ENCODE measurements at regions of chr12 and their contacts with region 1.

Region 1: GRCh38 chr12:123384318-123384993 is 524 bp downstream of the KMT5A start:
- DNase-seq: peak; percentile 11
- ATAC-seq: peak; percentile 4
- H3K4me3 ChIP-seq: peak overlapping the region; percentile 93
- H3K27ac ChIP-seq: no peak overlapping the region; the same call in 1 of the 2 replicates
- H3K4me1 ChIP-seq: peaks cover 18% of the 10 kb centered on the region
- H3K27me3 ChIP-seq: no peaks in the 10 kb centered on the region
- CTCF ChIP-seq: no peak; the same call in 1 of the 2 replicates

Region 2: GRCh38 chr12:123271001-123271729 is 113.3 kb before region 1 on chr12:
- CTCF ChIA-PET with region 1: no interaction called
- POLR2A ChIA-PET with region 1: no interaction called
- intact Hi-C with region 1: no loop called
- DNase-seq: peak; percentile 63
- ATAC-seq: peak; percentile 68
- H3K4me3 ChIP-seq: peak overlapping the region; percentile 99
- H3K27ac ChIP-seq: no peak overlapping the region
- H3K4me1 ChIP-seq: peaks cover 10% of the 10 kb centered on the region
- H3K27me3 ChIP-seq: no peaks in the 10 kb centered on the region
- CTCF ChIP-seq: 0 out of 2 replicates have a peak, but pooled peaks have one; percentile 18

Region 3: DNA sequence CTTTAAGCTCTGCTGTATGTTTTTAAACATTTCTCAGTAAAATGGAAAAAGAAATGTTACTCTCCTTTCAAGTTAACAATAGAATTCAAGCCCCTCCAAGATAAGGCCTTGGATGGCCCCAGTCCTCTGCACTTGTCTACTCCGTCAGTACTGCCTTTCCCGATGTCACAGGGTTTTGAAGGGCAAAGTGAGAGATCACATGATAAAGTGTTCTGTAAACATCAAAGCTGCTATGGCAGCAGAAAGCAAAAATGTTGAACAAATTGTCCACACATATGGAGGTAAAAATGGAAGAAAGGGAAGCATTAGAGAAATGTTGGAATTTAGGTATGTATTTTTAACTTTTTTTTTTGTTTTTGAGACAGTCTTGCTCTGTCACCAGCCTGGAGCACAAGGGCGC is 79.3 kb before region 1 on chr12:
- CTCF ChIA-PET with region 1: no interaction called
- POLR2A ChIA-PET with region 1: no interaction called
- intact Hi-C with region 1: no loop called
- DNase-seq: no peak
- ATAC-seq: no peak
- H3K4me3 ChIP-seq: no peak overlapping the region
- H3K27ac ChIP-seq: no peak overlapping the region
- H3K4me1 ChIP-seq: no peaks in the 10 kb centered on the region
- H3K27me3 ChIP-seq: no peaks in the 10 kb centered on the region
- CTCF ChIP-seq: no peak

Region 4: GRCh38 chr12:123365025-123365917 is 19.2 kb before region 1 on chr12:
- CTCF ChIA-PET with region 1: interaction called, 11 read pairs
- POLR2A ChIA-PET with region 1: interaction called, 11 read pairs
- intact Hi-C with region 1: loop called (anchors 1 kb)
- DNase-seq: peak; percentile 99
- ATAC-seq: peak; percentile 77
- H3K4me3 ChIP-seq: peak overlapping the region; percentile 78
- H3K27ac ChIP-seq: peak overlapping the region; percentile 83
- H3K4me1 ChIP-seq: peaks cover 8% of the 10 kb centered on the region
- H3K27me3 ChIP-seq: no peaks in the 10 kb centered on the region
- CTCF ChIP-seq: peak; percentile 89

Region 5: DNA sequence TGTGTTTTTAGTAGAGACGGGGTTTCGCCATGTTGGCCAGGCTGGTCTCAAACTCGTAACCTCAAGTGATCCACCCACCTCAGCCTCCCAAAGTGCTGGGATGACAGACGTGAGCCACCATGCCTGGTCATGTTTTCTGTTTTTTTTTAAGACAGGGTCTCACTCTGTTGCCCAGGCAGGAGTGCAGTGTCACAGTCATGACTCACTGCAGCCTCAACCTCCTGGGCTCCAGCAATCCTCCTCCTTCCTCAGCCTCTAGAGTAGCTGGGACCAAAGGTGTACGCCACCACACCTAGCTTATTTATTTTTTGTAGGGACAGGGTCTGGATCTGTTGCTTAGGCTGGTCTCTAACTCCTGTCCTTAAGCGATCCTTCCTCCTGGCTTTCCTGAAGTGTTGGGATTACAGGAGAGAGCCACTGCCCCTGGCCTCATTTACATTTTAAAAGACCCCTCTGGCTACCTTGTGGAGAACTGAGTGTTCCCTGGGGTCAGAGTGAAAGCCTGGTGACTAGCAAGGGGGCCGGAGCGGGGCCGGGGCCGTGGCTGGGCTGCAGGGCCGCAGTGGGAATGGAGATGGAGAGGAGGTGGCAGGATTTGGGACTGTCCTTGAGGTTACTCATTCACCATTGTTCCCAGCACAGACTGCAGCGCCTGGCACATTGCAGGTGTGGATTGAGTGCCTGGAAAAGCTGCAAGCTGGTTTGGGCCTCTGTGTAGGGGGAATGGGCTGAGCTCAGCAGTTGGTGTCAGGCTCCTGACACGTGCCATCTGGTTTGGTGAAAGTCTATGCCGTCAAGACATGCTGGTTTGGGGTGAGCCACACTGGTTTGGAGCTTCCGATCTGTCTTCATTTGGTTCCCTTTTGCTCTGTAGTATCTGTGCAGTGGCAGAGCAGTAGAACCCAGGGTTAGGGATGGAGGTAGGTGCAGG is 17.6 kb after region 1 on chr12:
- CTCF ChIA-PET with region 1: no interaction called
- POLR2A ChIA-PET with region 1: interaction called, 11 read pairs
- intact Hi-C with region 1: no loop called
- DNase-seq: no peak
- ATAC-seq: no peak
- H3K4me3 ChIP-seq: no peak overlapping the region
- H3K27ac ChIP-seq: no peak overlapping the region
- H3K4me1 ChIP-seq: no peaks in the 10 kb centered on the region
- H3K27me3 ChIP-seq: no peaks in the 10 kb centered on the region
- CTCF ChIP-seq: no peak

Region 6: GRCh38 chr12:123478762-123479161 is 94.3 kb after region 1 on chr12:
- CTCF ChIA-PET with region 1: no interaction called
- POLR2A ChIA-PET with region 1: no interaction called
- intact Hi-C with region 1: no loop called
- DNase-seq: no peak
- ATAC-seq: no peak
- H3K4me3 ChIP-seq: no peak overlapping the region
- H3K27ac ChIP-seq: no peak overlapping the region
- H3K4me1 ChIP-seq: no peaks in the 10 kb centered on the region
- H3K27me3 ChIP-seq: no peaks in the 10 kb centered on the region
- CTCF ChIP-seq: no peak

Region 7: DNA sequence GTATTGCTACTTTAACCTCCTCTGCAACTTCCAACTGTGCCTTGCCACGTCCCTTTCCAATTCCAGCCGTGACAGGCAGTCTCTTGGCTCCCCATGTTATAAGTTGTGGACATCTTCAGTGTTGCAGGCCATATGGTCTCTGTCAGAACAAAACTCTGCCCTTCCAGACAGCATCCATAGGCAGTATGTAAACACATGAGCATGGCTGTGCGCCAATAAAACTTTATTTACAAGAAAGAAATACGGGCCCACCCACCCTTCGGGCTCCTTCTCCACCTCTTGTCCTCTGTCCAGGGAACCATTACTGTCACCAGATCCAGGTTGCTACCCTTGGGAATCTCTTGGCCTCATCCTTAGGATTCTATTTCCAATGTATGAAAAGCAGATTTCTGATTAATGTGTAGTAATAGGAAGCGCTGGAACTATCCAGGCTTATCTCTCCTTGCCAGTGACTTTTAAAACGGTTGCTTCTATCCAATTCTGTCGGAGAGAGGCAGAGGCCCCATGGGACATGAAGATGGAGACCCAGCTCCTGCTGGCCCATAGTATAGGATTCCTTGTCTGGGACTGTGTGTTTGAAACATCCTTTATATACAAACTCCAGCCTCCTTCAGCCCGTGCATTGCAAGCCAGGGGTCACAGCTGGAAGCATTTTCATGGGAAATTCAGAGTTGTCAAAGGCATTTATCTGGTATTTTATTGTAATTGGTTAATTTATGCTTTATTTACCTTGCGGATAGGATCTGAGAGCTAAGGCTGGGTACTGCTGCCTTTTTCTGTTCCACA is 703.0 kb after region 1 on chr12:
- CTCF ChIA-PET with region 1: no interaction called
- POLR2A ChIA-PET with region 1: no interaction called
- intact Hi-C with region 1: no loop called
- DNase-seq: no peak
- ATAC-seq: no peak
- H3K4me3 ChIP-seq: no peak overlapping the region
- H3K27ac ChIP-seq: no peak overlapping the region
- H3K4me1 ChIP-seq: no peaks in the 10 kb centered on the region
- H3K27me3 ChIP-seq: no peaks in the 10 kb centered on the region
- CTCF ChIP-seq: no peak